ENCODE measurements at regions of chr11 and their contacts with region 1.

Region 1: GRCh38 chr11:37317802-37318201 is 719.8 kb upstream of the RAG2 start:
- DNase-seq: no peak
- ATAC-seq: no peak

Region 2: GRCh38 chr11:37343290-37343689 is 25.5 kb after region 1 on chr11:
- intact Hi-C with region 1: no loop called
- DNase-seq: no peak
- ATAC-seq: no peak

Region 3: GRCh38 chr11:37422511-37422910 is 104.7 kb after region 1 on chr11:
- intact Hi-C with region 1: loop called (anchors 2 kb)
- DNase-seq: no peak
- ATAC-seq: no peak

Region 4: DNA sequence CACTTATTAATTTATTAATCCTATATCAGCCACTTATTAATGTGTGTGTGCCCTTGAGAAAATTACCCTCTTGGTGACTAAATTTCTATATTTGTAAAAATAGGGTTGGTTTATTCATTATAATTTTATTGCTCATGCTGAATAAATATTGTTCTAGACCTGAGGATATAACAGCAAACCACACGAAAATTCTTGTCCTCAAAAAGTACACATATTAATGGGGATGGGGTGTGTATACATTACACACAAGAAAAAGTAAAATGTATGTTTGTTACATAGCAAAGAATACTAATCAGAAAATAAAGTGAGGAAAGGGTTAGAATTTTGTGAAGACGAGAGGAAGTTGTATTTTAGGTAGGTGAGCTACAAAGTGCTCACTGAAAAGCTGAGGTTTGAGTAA is 349.2 kb after region 1 on chr11:
- intact Hi-C with region 1: no loop called
- DNase-seq: no peak
- ATAC-seq: no peak